ENCODE measurements at regions of chr17 and their contacts with region 1.

Region 1: DNA sequence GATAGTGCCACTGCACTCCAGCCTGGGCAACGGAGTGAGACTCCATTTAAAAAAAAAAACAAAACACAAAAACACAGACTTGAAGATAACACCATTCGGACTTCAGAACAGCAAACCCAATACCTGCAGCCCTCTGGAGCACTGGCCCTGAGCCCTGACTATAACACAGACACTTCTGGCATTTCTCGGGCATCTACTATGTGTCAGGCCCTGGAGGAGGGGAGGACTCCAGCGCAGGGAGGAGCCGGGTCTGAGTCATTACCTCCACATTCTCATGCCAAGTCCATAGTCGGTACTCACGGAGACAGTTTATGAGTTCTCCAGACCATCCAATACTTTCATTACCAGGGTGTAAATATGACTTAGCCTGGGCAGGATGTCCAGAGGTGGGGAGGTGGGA is 48.8 kb downstream of the PITPNM3 start:
- DNase-seq: peak; percentile 40 to 74
- ATAC-seq: peak; percentile 84

Region 2: GRCh38 chr17:6098823-6099180 is 408.7 kb before region 1 on chr17:
- intact Hi-C with region 1: no loop called
- DNase-seq: no peak
- ATAC-seq: no peak

Region 3: DNA sequence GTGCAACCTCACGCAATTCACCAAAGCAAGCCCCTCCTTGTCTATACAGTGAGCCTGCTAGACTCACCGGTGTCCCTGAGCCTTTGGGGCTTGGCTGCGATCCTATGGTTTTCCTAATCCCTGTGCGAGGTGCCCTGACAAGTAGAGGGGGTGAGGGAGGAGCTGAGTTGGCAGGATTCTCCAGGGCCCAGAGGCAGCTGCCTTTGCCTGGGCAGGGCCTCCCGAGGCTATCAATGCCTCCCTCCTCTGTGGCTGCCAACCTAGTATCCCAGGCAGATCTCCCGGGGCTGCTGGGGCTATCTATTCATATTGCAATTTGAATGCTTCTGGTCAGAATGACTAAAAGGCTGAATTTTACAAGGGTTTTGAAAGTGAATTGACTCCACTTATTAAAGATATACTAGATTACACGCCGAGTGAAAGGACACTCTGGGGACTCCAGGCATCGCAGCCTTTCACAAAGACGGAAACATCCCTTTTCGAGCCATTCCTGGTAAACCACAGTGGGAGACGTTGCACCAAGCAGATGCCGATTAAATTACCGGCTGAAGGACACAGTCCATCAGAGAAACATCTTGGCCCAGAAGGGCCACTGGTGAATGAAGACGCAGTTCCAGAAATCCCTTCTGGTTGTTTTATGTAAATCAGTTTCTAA is 60.1 kb after region 1 on chr17:
- intact Hi-C with region 1: loop called in 1 of 2 experiments (anchors 10 kb)
- DNase-seq: no peak
- ATAC-seq: peak; percentile 60

Measured in left colon (tissue), 2 donors.